ENCODE measurements at regions of chr3 and their contacts with region 1.

Region 1: DNA sequence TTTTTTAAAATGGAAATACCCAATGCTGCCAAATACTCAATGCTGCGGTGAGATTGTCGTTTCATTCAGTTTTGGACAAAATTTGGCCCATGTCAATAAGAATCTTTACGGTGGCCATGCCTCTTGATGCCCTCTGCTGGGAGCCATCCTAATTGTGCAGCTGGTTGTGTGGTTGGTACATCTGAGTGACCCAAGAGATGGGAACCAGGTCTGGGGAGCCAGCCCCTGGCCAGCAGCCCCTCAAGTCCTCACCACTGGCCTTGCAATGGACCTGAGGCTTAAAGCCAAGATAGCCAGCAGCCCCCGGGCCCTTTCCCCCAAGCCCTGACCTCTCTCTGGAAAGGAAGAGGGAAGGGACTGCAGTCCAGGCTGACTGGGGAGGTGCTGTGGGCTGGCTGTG is 36.4 kb upstream of the ESYT3 start:
- DNase-seq: no peak
- ATAC-seq: no peak
- H3K4me3 ChIP-seq: no peak overlapping the region
- H3K27ac ChIP-seq: peak overlapping the region in 7 of 10 donors; percentile 28 to 92 (median 75)
- H3K4me1 ChIP-seq: peaks cover 0 to 92% (median 42%) of the 10 kb centered on the region in 9 donors
- H3K27me3 ChIP-seq: no peaks in the 10 kb centered on the region
- CTCF ChIP-seq: peak in 6 of 9 donors; percentile 15 to 46 (median 38)

Region 2: DNA sequence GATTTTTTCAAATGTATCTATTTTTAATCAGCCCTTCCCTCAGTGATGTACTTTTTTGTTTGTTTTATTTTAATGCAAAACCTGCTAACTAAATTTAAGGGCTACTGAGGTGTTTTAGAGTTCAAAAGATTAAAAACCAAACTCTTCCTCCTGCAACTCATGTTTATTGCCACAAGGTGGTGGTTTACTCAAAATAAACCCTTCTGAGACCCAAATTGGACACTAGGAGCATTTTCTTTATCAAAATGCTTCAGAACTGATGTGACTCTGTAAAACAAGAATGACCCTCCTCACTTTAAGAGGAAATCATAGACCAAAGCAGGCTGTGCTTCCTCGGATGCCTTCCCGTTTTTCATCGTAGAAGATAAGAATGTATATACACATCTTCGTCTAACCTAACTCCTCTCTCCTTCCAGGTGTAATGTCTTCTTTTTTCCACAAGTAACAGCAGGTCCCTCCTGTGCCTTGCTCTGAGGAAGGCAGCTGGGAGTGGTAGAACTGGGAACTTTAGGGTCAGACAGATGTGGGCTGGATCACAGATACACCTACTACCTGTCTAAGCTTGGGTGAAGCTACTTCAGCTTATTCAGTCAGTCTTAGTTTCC is 65.4 kb before region 1 on chr3:
- intact Hi-C with region 1: loop called in 3 of 10 experiments (anchors 5 kb)
- DNase-seq: no peak
- ATAC-seq: no peak
- H3K4me3 ChIP-seq: no peak overlapping the region
- H3K27ac ChIP-seq: no peak overlapping the region
- H3K4me1 ChIP-seq: peaks cover 0 to 25% (median 8%) of the 10 kb centered on the region in 9 donors
- H3K27me3 ChIP-seq: peaks cover 0 to 6% (median 0%) of the 10 kb centered on the region in 7 donors
- CTCF ChIP-seq: peak; percentile 46 to 76 (median 71)

Region 3: DNA sequence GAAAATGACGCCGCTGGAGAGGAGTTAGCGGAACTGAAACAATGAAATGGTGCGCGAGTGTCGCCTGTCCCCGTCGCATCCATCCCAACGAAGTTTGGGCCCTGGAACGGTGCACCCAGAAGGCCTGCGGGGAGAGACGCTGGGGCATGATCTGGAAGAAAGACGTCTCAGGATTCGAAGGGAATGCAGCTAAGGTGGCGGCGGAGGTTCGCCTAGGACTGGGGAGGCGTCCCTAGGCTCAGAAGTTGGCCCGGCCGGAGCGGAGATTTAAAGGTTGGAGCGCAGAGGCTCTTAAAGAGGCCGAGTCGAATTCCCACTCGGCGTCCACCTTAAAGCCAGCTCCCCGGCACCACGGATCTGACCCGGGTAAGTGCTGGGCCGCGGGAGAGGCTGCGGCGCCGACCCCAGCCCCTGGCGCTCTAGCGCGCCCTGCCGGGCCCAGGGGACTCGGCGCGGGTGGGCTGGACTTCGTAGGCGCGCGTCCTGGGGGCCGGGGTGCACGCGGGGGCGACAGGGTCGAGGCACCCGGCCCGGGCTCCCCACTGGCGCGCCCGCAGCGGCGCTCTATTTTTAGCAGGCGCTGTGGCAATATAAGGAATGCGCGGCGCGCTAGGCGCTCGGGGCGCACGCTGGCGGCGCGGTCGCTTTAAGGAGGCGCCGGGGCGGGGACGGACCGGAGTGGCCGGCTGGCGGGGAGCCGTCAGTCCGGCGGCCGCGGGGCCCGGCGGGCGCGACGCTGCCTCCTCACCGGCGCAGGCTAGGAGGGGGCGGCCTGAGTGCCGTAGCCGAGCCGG is 49.8 kb before region 1 on chr3 and contains the start of gene MRAS:
- intact Hi-C with region 1: loop called in 8 of 10 experiments (anchors 5 to 10 kb)
- DNase-seq: peak; percentile 75 to 83
- ATAC-seq: peak; percentile 50 to 87 (median 74)
- H3K4me3 ChIP-seq: peak within 1 kb of the TSS; percentile 38 to 94 (median 86)
- H3K27ac ChIP-seq: peak within 1 kb of the TSS; percentile 89 to 99 (median 94)
- H3K4me1 ChIP-seq: peaks cover 0 to 47% (median 33%) of the 10 kb centered on the region in 9 donors
- H3K27me3 ChIP-seq: peaks cover 0 to 14% (median 0%) of the 10 kb centered on the region in 7 donors
- CTCF ChIP-seq: peak in 7 of 9 donors; percentile 34 to 70 (median 42)
- total RNA-seq, gene MRAS: 221 to 381 (median 266) TPM

Region 4: GRCh38 chr3:138361561-138361971 is 36.4 kb before region 1 on chr3:
- intact Hi-C with region 1: loop called in 1 of 10 experiments (anchors 5 kb)
- DNase-seq: no peak
- ATAC-seq: peak in 6 of 8 donors; percentile 8 to 31 (median 20)
- H3K4me3 ChIP-seq: no peak overlapping the region
- H3K27ac ChIP-seq: peak overlapping the region; percentile 13 to 99 (median 71)
- H3K4me1 ChIP-seq: peaks cover 46 to 100% (median 90%) of the 10 kb centered on the region in 9 donors
- H3K27me3 ChIP-seq: no peaks in the 10 kb centered on the region
- CTCF ChIP-seq: no peak

Region 5: DNA sequence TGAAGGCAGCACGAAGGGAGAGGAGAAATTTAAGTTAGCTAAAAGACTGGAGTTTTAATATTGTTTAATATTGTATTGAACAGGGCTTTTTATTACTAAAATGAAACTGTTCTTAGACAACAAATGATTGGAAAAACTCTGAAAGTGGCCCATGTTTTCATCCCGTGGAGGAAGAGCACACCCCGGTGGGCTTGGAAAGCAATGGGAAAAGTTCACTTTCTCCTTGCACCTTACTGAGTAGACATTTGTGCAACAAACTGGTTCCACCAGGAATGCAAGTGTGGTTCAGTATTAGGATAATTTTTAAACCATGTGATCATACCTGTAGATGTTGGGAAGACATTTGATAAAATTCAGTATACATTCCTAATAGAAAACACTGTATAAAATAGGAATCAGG is 28.2 kb after region 1 on chr3:
- intact Hi-C with region 1: no loop called
- DNase-seq: no peak
- ATAC-seq: peak in 2 of 8 donors; percentile 33 to 61
- H3K4me3 ChIP-seq: no peak overlapping the region
- H3K27ac ChIP-seq: no peak overlapping the region
- H3K4me1 ChIP-seq: no peaks in the 10 kb centered on the region
- H3K27me3 ChIP-seq: peaks cover 0 to 7% (median 0%) of the 10 kb centered on the region in 7 donors
- CTCF ChIP-seq: peak in 8 of 9 donors; percentile 23 to 63 (median 53)

Measured in heart right ventricle (tissue), 16 donors.